Activated CD8-positive, alpha-beta T cell treated with anti-CD3 and anti-CD28 coated beads for 36 hours (primary cell): ENCODE measurements at regions of chr3 and their contacts with region 1.

Region 1: DNA sequence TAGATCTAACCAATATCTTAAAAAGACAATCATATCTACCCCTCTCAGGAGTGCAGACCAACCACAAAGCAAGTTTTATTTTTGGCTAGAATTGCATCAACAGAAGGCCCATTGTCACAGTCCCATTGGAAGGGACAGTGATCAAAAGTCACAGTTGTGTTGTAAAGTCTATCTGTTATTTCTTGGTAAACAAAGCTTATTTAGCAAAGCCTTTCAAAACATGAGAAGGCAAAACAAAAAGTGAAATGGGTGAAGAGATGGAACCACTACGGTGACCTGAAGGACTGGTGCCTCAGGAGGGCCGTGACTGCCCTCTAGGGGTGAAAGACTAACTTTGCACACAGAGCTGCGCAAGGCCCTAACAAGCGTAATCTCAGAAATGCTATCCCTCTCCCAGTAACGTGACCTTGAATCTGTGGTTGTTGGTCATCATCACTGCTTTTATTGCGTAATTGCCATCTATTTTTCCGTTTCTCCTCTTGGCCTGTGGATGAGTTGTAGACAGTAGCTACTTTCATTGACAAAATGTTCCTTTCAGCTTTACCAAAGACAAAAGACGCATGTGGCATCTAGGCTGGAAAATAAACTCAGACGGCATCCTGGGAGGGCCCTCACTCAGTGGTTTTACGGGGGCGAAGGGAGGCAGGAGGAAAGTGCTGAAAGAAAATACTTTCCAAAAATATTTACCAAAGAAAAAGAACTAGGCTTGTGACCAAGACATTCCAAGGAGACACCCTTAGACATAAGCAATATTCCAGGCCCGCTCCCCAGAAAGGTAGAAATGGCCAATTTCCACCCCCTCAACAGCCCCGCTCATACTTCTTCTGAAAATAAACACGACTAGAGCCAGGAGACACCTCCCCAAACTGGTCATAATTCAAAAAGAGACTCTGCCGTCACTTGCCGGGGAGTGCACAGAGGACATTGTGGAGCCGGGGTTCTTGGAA is 79.4 kb downstream of the FRMD4B start:
- DNase-seq: peak; percentile 75
- ATAC-seq: peak; percentile 94
- H3K4me3 Mint-ChIP-seq: no peak overlapping the region
- H3K27ac Mint-ChIP-seq: peak overlapping the region; percentile 16
- H3K4me1 Mint-ChIP-seq: peaks cover 20% of the 10 kb centered on the region
- H3K27me3 Mint-ChIP-seq: no peaks in the 10 kb centered on the region
- CTCF ChIP-seq: peak; percentile 82

Region 2: GRCh38 chr3:68345781-68346180 is 960.7 kb before region 1 on chr3:
- CTCF ChIA-PET with region 1: no interaction called
- POLR2A ChIA-PET with region 1: no interaction called
- intact Hi-C with region 1: no loop called
- DNase-seq: no peak
- ATAC-seq: no peak
- H3K4me3 Mint-ChIP-seq: no peak overlapping the region
- H3K27ac Mint-ChIP-seq: no peak overlapping the region
- H3K4me1 Mint-ChIP-seq: no peaks in the 10 kb centered on the region
- H3K27me3 Mint-ChIP-seq: no peaks in the 10 kb centered on the region
- CTCF ChIP-seq: no peak

Region 3: DNA sequence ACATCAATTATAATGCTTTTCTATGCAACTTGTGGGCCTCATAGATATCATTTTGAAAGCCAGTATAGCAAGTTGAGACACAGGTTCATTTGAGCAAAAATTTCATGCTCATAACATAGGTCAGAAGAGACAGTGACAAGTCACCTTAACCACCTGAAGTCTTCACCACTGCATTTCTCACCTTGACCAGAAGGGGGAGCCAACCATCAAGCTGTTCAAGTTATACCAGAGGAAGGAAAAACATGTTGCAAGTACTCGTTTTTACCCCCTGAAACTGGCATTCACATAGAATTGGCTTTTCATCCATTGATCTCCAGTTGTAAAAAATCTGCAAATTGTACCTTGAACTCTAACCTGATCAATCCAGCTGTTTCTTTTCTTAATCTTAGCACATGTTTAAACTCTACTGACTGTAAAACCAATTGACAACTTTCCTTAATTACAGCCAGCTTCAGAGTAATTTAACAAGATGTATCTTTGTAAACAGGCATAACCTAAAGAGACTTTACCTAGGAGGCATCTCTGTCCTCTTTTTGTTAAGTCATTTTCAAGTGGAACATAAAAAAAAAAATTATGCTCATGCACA is 185.5 kb before region 1 on chr3:
- CTCF ChIA-PET with region 1: interaction called, 68 read pairs
- POLR2A ChIA-PET with region 1: no interaction called
- intact Hi-C with region 1: loop called (anchors 1 kb)
- DNase-seq: peak; percentile 93
- ATAC-seq: peak; percentile 96
- H3K4me3 Mint-ChIP-seq: no peak overlapping the region
- H3K27ac Mint-ChIP-seq: no peak overlapping the region
- H3K4me1 Mint-ChIP-seq: peaks cover 5% of the 10 kb centered on the region
- H3K27me3 Mint-ChIP-seq: no peaks in the 10 kb centered on the region
- CTCF ChIP-seq: peak; percentile 96

Region 4: DNA sequence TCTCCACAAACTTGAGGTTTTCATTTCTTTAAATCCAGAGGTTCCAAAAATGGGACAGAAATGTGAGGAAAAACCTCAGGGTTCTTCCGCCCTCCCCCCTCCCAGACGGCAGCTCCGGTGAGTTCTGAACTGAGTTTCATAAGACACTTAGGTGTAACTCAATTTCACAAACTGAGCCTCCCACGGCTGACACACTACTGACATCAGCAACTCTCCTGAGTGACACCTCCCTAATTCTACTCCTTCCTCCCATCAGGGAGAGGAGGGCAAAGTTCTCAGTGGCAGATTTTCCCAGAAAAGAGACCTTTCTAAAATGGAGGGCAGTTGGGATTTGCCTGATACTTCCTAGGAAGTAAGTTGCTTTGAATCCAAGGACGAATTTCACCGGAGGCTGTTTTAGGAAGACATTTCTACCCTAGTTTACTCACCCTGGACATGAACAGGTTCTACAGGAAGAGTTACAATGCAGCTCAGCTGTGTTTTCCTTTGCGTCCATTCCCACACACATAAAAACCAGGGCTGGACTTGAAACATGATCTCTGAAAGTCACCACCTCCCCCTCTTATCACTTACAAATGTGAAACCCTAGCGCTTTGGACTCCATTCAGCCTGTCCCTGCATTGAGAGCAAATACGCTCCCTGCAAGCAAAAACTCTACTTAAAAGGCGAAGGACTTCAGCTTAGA is 106.0 kb before region 1 on chr3:
- CTCF ChIA-PET with region 1: interaction called, 60 read pairs
- POLR2A ChIA-PET with region 1: interaction called, 6 read pairs
- intact Hi-C with region 1: loop called (anchors 2 kb)
- DNase-seq: peak; percentile 78
- ATAC-seq: peak; percentile 33
- H3K4me3 Mint-ChIP-seq: peak overlapping the region; percentile 74
- H3K27ac Mint-ChIP-seq: peak overlapping the region; percentile 89
- H3K4me1 Mint-ChIP-seq: peaks cover 78% of the 10 kb centered on the region
- H3K27me3 Mint-ChIP-seq: no peaks in the 10 kb centered on the region
- CTCF ChIP-seq: no peak

Region 5: DNA sequence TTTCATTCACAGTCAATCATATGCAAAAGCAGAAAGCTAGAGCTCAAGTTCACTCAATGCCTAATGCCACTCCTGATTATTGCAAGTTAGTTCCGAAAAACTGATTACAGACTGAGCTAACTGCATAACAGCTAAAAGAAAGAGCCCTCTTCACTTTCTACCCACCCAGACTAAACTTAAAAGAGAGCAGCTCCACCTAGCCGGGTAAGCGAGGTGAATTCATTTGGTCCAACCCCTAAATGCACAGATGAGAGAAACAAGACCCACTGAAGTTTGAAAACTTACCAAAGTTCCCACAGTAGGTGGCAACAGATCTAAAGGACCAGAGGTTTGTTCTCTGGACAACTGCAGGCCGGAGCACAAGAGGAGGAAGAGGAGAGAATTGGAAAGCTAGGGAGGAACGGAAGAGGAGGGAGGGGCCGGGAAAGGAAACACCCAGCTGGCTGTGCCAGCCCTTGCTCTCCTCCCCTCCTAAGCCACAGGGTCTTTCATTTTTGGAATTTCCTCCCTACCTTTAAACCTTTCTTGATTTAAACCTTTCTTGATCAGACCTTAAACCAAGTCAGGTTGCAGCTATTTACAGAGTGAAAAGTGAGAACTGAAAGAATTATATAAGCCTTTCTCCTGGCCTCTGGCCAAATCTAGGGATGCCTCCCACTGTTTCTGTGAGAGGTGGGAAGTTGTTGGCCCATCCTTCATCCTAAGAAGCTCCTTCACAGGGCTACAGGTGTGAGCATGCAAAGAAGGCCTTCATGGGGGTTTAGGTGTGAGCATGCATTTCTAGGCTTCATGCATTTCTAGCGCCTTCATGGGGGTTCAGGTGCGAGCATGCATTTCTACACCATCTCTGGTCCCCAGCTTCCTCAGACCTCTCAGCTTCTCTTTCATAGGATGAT is 69.5 kb before region 1 on chr3:
- CTCF ChIA-PET with region 1: interaction called, 11 read pairs
- POLR2A ChIA-PET with region 1: no interaction called
- intact Hi-C with region 1: no loop called
- DNase-seq: peak; percentile 18
- ATAC-seq: peak; percentile 51
- H3K4me3 Mint-ChIP-seq: no peak overlapping the region
- H3K27ac Mint-ChIP-seq: no peak overlapping the region
- H3K4me1 Mint-ChIP-seq: peaks cover 11% of the 10 kb centered on the region
- H3K27me3 Mint-ChIP-seq: no peaks in the 10 kb centered on the region
- CTCF ChIP-seq: no peak

Region 6: DNA sequence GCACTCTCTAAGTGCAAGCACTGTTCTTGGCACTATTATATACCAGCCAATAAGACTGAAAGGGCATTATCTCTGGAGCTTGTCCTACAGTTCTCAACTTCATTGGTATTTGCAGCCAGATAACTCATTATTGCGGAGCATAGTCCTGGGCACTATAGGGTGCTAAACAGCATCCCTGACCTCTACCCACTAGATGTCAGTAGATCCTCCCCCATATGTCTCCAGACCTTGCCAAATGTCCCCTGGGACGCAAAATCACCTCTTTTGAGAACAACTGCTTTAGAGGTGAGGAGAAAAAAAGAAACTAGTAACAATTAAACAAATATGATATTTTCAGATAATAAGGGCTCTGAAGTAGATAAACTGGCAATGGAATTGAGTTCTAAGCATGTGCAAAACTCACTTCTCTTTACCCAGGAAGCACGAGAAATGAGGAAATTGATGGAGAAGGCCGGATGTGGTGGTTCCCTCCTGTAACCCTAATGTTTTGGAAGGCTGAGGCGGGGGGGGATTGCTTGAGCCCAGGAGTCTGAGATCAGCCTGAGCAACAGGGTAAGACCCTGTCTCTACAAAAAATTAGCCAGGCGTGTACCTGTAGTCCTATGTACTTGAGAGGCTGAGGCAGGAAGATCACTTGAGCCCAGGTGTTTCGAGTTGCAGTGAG is 18.0 kb after region 1 on chr3:
- CTCF ChIA-PET with region 1: interaction called, 66 read pairs
- POLR2A ChIA-PET with region 1: interaction called, 5 read pairs
- intact Hi-C with region 1: no loop called
- DNase-seq: peak; percentile 37
- ATAC-seq: peak; percentile 43
- H3K4me3 Mint-ChIP-seq: no peak overlapping the region
- H3K27ac Mint-ChIP-seq: peak overlapping the region; percentile 43
- H3K4me1 Mint-ChIP-seq: peaks cover 50% of the 10 kb centered on the region
- H3K27me3 Mint-ChIP-seq: no peaks in the 10 kb centered on the region
- CTCF ChIP-seq: peak; percentile 31

Region 7: GRCh38 chr3:69379661-69380060 is 73.1 kb after region 1 on chr3:
- CTCF ChIA-PET with region 1: no interaction called
- POLR2A ChIA-PET with region 1: no interaction called
- intact Hi-C with region 1: no loop called
- DNase-seq: no peak
- ATAC-seq: no peak
- H3K4me3 Mint-ChIP-seq: no peak overlapping the region
- H3K27ac Mint-ChIP-seq: no peak overlapping the region
- H3K4me1 Mint-ChIP-seq: no peaks in the 10 kb centered on the region
- H3K27me3 Mint-ChIP-seq: peaks cover 24% of the 10 kb centered on the region
- CTCF ChIP-seq: no peak

Region 8: DNA sequence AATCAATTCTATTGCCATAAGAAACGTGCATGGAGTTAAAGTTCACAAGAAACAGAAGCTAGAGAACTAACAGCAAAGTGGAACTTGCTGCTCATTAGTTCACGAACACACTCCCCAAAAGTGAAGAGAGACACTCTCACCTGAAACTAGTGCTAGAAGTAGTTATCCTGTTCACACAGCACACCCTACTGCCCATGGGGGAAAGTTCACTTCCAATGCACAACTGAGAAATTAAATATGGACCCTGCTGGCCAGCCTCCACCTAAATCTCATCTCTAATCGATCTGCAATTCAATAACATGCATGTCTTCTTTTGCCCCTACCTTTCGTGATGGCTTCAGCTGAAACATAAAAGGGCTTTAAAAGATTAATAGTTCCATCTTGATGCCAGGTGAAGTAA is 118.7 kb after region 1 on chr3:
- CTCF ChIA-PET with region 1: interaction called, 12 read pairs
- POLR2A ChIA-PET with region 1: no interaction called
- intact Hi-C with region 1: no loop called
- DNase-seq: peak; percentile 54
- ATAC-seq: peak; percentile 65
- H3K4me3 Mint-ChIP-seq: no peak overlapping the region
- H3K27ac Mint-ChIP-seq: no peak overlapping the region
- H3K4me1 Mint-ChIP-seq: peaks cover 2% of the 10 kb centered on the region
- H3K27me3 Mint-ChIP-seq: peaks cover 2% of the 10 kb centered on the region
- CTCF ChIP-seq: peak; percentile 24

Region 9: GRCh38 chr3:70011582-70011981 is 705.1 kb after region 1 on chr3:
- CTCF ChIA-PET with region 1: no interaction called
- POLR2A ChIA-PET with region 1: no interaction called
- intact Hi-C with region 1: no loop called
- DNase-seq: no peak
- ATAC-seq: no peak
- H3K4me3 Mint-ChIP-seq: no peak overlapping the region
- H3K27ac Mint-ChIP-seq: no peak overlapping the region
- H3K4me1 Mint-ChIP-seq: no peaks in the 10 kb centered on the region
- H3K27me3 Mint-ChIP-seq: no peaks in the 10 kb centered on the region
- CTCF ChIP-seq: no peak